ENCODE measurements at regions of chr6 and their contacts with region 1.

Region 1: GRCh38 chr6:53484476-53485280 is 60.2 kb downstream of the GCLC start:
- DNase-seq: peak; percentile 86
- ATAC-seq: peak; percentile 76
- H3K4me3 ChIP-seq: peak overlapping the region in 1 of 5 experiments; percentile 0
- H3K4me3 Mint-ChIP-seq: peak overlapping the region; percentile 13
- H3K27ac ChIP-seq: no peak overlapping the region
- H3K27ac Mint-ChIP-seq: peak overlapping the region; percentile 6
- H3K4me1 ChIP-seq: peaks cover 42 to 46% of the 10 kb centered on the region in 2 donors
- H3K4me1 Mint-ChIP-seq: peaks cover 58% of the 10 kb centered on the region
- H3K27me3 ChIP-seq: peaks cover 0 to 2% (median 0%) of the 10 kb centered on the region in 4 experiments
- H3K27me3 Mint-ChIP-seq: peaks cover 16% of the 10 kb centered on the region
- CTCF ChIP-seq: peak; percentile 99

Region 2: GRCh38 chr6:52881996-52882841 is 602.5 kb before region 1 on chr6:
- CTCF ChIA-PET with region 1: interaction called, 3 read pairs
- POLR2A ChIA-PET with region 1: no interaction called
- intact Hi-C with region 1: loop called (anchors 2 kb)
- DNase-seq: peak; percentile 76
- ATAC-seq: peak; percentile 96
- H3K4me3 ChIP-seq: peak overlapping the region; percentile 42 to 69 (median 60)
- H3K4me3 Mint-ChIP-seq: peak overlapping the region; percentile 88
- H3K27ac ChIP-seq: peak overlapping the region in 1 of 2 donors; percentile 61
- H3K27ac Mint-ChIP-seq: peak overlapping the region; percentile 3
- H3K4me1 ChIP-seq: peaks cover 0 to 9% of the 10 kb centered on the region in 2 donors
- H3K4me1 Mint-ChIP-seq: peaks cover 3% of the 10 kb centered on the region
- H3K27me3 ChIP-seq: peaks cover 0 to 2% (median 0%) of the 10 kb centered on the region in 4 experiments
- H3K27me3 Mint-ChIP-seq: no peaks in the 10 kb centered on the region
- CTCF ChIP-seq: peak; percentile 89

Region 3: GRCh38 chr6:53103992-53104675 is 380.5 kb before region 1 on chr6:
- CTCF ChIA-PET with region 1: interaction called, 39 read pairs
- POLR2A ChIA-PET with region 1: no interaction called
- intact Hi-C with region 1: loop called (anchors 1 kb)
- DNase-seq: peak; percentile 52
- ATAC-seq: peak; percentile 53
- H3K4me3 ChIP-seq: no peak overlapping the region
- H3K4me3 Mint-ChIP-seq: no peak overlapping the region
- H3K27ac ChIP-seq: no peak overlapping the region
- H3K27ac Mint-ChIP-seq: no peak overlapping the region
- H3K4me1 ChIP-seq: no peaks in the 10 kb centered on the region
- H3K4me1 Mint-ChIP-seq: no peaks in the 10 kb centered on the region
- H3K27me3 ChIP-seq: no peaks in the 10 kb centered on the region
- H3K27me3 Mint-ChIP-seq: no peaks in the 10 kb centered on the region
- CTCF ChIP-seq: peak; percentile 54

Region 4: GRCh38 chr6:53359072-53359842 is 125.4 kb before region 1 on chr6:
- CTCF ChIA-PET with region 1: interaction called, 5 read pairs
- POLR2A ChIA-PET with region 1: interaction called, 9 read pairs
- intact Hi-C with region 1: loop called (anchors 5 kb)
- DNase-seq: peak; percentile 94
- ATAC-seq: peak; percentile 90
- H3K4me3 ChIP-seq: peak overlapping the region; percentile 61 to 81 (median 70)
- H3K4me3 Mint-ChIP-seq: peak overlapping the region; percentile 88
- H3K27ac ChIP-seq: peak overlapping the region; percentile 99 to 100
- H3K27ac Mint-ChIP-seq: peak overlapping the region; percentile 99
- H3K4me1 ChIP-seq: peaks cover 46 to 53% of the 10 kb centered on the region in 2 donors
- H3K4me1 Mint-ChIP-seq: peaks cover 51% of the 10 kb centered on the region
- H3K27me3 ChIP-seq: no peaks in the 10 kb centered on the region
- H3K27me3 Mint-ChIP-seq: no peaks in the 10 kb centered on the region
- CTCF ChIP-seq: no peak

Region 5: DNA sequence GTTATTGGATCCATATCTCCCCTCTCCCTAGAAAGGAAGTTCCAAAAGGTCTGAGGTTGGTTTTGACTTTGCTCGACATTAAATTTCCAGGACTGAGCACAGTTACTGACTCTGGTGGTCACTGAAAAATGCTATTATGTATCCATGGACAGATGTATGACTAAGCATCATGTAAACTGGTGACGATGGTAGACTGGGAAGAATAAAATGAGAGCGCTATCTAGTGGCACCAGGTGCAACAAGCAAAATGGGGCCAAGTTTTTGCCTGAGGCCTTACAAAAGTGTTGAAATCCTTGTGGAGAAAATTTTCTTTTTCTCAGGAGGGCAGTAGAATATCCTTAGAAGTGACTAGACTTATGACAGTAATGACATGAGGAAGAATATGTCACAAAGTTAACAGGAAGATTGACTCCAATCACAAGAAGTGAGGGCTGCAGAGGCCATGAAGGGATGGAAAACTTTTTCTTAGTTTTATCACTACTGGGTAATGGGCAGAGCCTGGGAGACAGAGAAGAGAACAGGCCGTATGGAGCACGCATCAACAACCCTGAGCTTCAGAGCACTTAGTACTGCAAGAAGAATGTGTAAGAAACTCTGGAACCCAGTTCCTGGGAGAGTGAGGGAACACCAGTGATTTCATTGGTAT is 47.0 kb before region 1 on chr6:
- CTCF ChIA-PET with region 1: interaction called, 15 read pairs
- POLR2A ChIA-PET with region 1: no interaction called
- intact Hi-C with region 1: loop called (anchors 1 kb)
- DNase-seq: peak; percentile 51
- ATAC-seq: peak; percentile 73
- H3K4me3 ChIP-seq: no peak overlapping the region
- H3K4me3 Mint-ChIP-seq: no peak overlapping the region
- H3K27ac ChIP-seq: no peak overlapping the region
- H3K27ac Mint-ChIP-seq: peak overlapping the region; percentile 32
- H3K4me1 ChIP-seq: peaks cover 0 to 13% of the 10 kb centered on the region in 2 donors
- H3K4me1 Mint-ChIP-seq: peaks cover 23% of the 10 kb centered on the region
- H3K27me3 ChIP-seq: no peaks in the 10 kb centered on the region
- H3K27me3 Mint-ChIP-seq: no peaks in the 10 kb centered on the region
- CTCF ChIP-seq: peak; percentile 60

Region 6: GRCh38 chr6:53532061-53532797 is 47.6 kb after region 1 on chr6:
- CTCF ChIA-PET with region 1: no interaction called
- POLR2A ChIA-PET with region 1: no interaction called
- intact Hi-C with region 1: no loop called
- DNase-seq: peak; percentile 14
- ATAC-seq: no peak
- H3K4me3 ChIP-seq: peak overlapping the region in 1 of 5 experiments; percentile 5
- H3K4me3 Mint-ChIP-seq: peak overlapping the region; percentile 13
- H3K27ac ChIP-seq: no peak overlapping the region
- H3K27ac Mint-ChIP-seq: peak overlapping the region; percentile 16
- H3K4me1 ChIP-seq: peaks cover 7 to 13% of the 10 kb centered on the region in 2 donors
- H3K4me1 Mint-ChIP-seq: peaks cover 30% of the 10 kb centered on the region
- H3K27me3 ChIP-seq: no peaks in the 10 kb centered on the region
- H3K27me3 Mint-ChIP-seq: no peaks in the 10 kb centered on the region
- CTCF ChIP-seq: no peak

Region 7: GRCh38 chr6:53718597-53719460 is 234.2 kb after region 1 on chr6:
- CTCF ChIA-PET with region 1: interaction called, 10 read pairs
- POLR2A ChIA-PET with region 1: no interaction called
- intact Hi-C with region 1: no loop called
- DNase-seq: peak; percentile 71
- ATAC-seq: peak; percentile 75
- H3K4me3 ChIP-seq: no peak overlapping the region
- H3K4me3 Mint-ChIP-seq: no peak overlapping the region
- H3K27ac ChIP-seq: no peak overlapping the region
- H3K27ac Mint-ChIP-seq: no peak overlapping the region
- H3K4me1 ChIP-seq: no peaks in the 10 kb centered on the region
- H3K4me1 Mint-ChIP-seq: peaks cover 2% of the 10 kb centered on the region
- H3K27me3 ChIP-seq: peaks cover 0 to 9% (median 0%) of the 10 kb centered on the region in 4 experiments
- H3K27me3 Mint-ChIP-seq: peaks cover 29% of the 10 kb centered on the region
- CTCF ChIP-seq: peak; percentile 82